MCF 10A (cell line): ENCODE measurements at regions of chr17 and their contacts with region 1.

Region 1: GRCh38 chr17:53137869-53138268 is 684.9 kb upstream of the KIF2B start:
- DNase-seq: no peak
- H3K4me3 Mint-ChIP-seq: no peak overlapping the region
- H3K27ac Mint-ChIP-seq: no peak overlapping the region
- H3K4me1 Mint-ChIP-seq: no peaks in the 10 kb centered on the region
- H3K27me3 Mint-ChIP-seq: peaks cover 94% of the 10 kb centered on the region
- CTCF ChIP-seq: no peak

Region 2: GRCh38 chr17:52938623-52939230 is 199.1 kb before region 1 on chr17:
- CTCF ChIA-PET with region 1: no interaction called
- POLR2A ChIA-PET with region 1: no interaction called
- intact Hi-C with region 1: no loop called
- DNase-seq: no peak
- H3K4me3 Mint-ChIP-seq: no peak overlapping the region
- H3K27ac Mint-ChIP-seq: no peak overlapping the region
- H3K4me1 Mint-ChIP-seq: no peaks in the 10 kb centered on the region
- H3K27me3 Mint-ChIP-seq: no peaks in the 10 kb centered on the region
- CTCF ChIP-seq: no peak

Region 3: GRCh38 chr17:53118948-53119347 is 18.9 kb before region 1 on chr17:
- CTCF ChIA-PET with region 1: no interaction called
- POLR2A ChIA-PET with region 1: interaction called, 3 read pairs
- intact Hi-C with region 1: loop called (anchors 2 kb)
- DNase-seq: no peak
- H3K4me3 Mint-ChIP-seq: no peak overlapping the region
- H3K27ac Mint-ChIP-seq: no peak overlapping the region
- H3K4me1 Mint-ChIP-seq: no peaks in the 10 kb centered on the region
- H3K27me3 Mint-ChIP-seq: peaks cover 48% of the 10 kb centered on the region
- CTCF ChIP-seq: no peak